ENCODE measurements at regions of chr3 and their contacts with region 1.

Region 1: GRCh38 chr3:28348629-28349483 is at the starts of genes AZI2 and ZCWPW2:
- DNase-seq: peak; percentile 93
- ATAC-seq: peak; percentile 89
- H3K4me3 Mint-ChIP-seq: peak within 1 kb of the TSS; percentile 97
- H3K27ac Mint-ChIP-seq: peak within 1 kb of the TSS; percentile 97
- H3K4me1 Mint-ChIP-seq: peaks cover 43% of the 10 kb centered on the region
- H3K27me3 Mint-ChIP-seq: no peaks in the 10 kb centered on the region
- CTCF ChIP-seq: no peak
- total RNA-seq, gene AZI2: 20.8 and 21.8 TPM in 2 replicates
- total RNA-seq, gene ZCWPW2: not detected in 2 replicates

Region 2: DNA sequence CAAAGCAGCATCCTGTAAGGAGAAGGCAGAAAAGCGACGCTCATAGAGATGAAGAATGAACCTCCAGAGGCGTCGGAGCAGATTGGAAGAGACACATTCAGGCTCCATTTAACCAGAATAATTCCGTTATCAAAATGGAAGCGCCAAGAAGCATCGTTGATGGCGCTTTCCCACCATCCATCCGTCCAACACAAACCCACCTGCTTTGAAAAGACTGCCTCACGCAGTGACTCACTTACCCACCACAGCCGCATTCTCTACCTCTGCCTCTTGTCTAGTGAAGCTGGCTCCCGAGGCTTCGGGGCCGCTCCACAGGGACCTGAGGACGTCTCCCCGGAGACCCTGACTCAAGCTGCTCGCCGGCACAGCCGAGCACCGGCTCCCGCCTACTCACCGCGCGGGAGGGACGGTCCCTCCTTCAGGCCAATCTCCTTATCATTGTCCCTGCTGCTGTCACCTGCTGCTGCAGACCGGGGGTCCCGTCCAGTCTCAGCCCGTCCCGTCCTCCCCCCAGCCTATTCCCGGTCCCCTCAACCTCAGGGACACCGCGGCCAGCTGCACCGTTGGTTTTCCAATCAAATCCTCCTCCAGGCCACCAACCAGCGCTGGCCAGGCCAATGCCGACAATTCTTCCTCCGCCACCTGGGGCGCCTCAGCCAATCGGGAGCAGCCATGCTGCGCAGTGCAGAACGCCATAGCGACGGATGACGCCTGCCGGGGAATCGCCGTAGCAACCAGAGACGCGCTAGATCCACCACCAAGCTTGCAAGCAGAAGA is 979.8 kb before region 1 on chr3 and contains the start of gene NEK10:
- CTCF ChIA-PET with region 1: no interaction called
- POLR2A ChIA-PET with region 1: interaction called, 3 read pairs
- intact Hi-C with region 1: loop called (anchors 2 kb)
- DNase-seq: peak; percentile 83
- ATAC-seq: peak; percentile 97
- H3K4me3 Mint-ChIP-seq: peak within 1 kb of the TSS; percentile 94
- H3K27ac Mint-ChIP-seq: peak within 1 kb of the TSS; percentile 65
- H3K4me1 Mint-ChIP-seq: peaks cover 15% of the 10 kb centered on the region
- H3K27me3 Mint-ChIP-seq: no peaks in the 10 kb centered on the region
- CTCF ChIP-seq: no peak
- total RNA-seq, gene NEK10: 0.59 and 0.84 TPM in 2 replicates

Region 3: DNA sequence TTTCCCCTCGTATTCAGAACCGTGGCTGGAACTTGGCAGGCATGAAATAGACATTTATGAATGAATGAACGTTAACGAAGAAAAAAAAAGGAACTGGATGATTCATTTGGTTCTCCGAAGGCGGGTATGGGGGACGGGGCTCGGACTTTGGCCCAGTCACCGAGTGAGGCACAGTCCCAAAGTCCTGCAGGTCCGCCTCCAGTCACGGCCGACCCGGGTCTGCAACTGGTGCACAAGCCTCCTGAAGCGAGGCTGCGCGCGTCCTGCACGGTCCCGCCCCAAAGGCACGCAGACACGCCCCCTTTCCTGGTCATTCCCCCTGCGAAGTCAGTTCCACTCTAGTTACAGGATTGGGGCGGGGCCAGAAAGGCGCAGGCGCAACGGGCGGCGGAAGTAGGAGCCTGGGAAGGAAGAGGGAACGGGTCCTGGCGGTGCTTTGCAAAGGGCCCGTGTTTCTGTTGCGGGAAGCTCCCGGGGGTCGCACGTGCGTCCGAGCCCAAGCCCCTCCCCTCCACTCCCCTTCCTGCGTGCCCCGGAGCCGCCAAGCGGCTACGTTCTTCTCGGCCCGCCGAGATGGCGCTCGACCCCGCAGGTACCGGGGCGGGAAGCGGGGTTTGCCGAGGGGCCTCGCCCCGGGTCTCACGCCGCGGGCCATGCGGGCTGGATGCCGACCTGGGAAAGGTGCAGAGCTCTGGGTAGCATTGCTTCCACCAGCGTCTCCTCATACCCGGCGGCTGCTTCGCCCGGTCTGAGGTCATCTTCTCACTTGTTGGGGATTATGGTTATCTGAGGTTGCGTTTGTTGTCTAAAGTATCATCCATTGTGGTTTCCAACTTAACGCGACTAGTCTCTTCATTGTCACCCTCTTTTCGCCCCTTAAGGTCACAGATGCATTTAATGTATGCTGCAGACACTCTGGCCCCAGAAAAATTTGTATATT is 107.4 kb before region 1 on chr3 and contains the start of gene CMC1:
- CTCF ChIA-PET with region 1: no interaction called
- POLR2A ChIA-PET with region 1: interaction called, 6 read pairs
- intact Hi-C with region 1: loop called (anchors 1 kb)
- DNase-seq: peak; percentile 88
- ATAC-seq: peak; percentile 94
- H3K4me3 Mint-ChIP-seq: peak within 1 kb of the TSS; percentile 98
- H3K27ac Mint-ChIP-seq: peak within 1 kb of the TSS; percentile 89
- H3K4me1 Mint-ChIP-seq: peaks cover 27% of the 10 kb centered on the region
- H3K27me3 Mint-ChIP-seq: no peaks in the 10 kb centered on the region
- CTCF ChIP-seq: no peak
- total RNA-seq, gene CMC1: 10.9 and 14.2 TPM in 2 replicates